IMR-90 (cell line): ENCODE measurements at regions of chr10 and their contacts with region 1.

Region 1: DNA sequence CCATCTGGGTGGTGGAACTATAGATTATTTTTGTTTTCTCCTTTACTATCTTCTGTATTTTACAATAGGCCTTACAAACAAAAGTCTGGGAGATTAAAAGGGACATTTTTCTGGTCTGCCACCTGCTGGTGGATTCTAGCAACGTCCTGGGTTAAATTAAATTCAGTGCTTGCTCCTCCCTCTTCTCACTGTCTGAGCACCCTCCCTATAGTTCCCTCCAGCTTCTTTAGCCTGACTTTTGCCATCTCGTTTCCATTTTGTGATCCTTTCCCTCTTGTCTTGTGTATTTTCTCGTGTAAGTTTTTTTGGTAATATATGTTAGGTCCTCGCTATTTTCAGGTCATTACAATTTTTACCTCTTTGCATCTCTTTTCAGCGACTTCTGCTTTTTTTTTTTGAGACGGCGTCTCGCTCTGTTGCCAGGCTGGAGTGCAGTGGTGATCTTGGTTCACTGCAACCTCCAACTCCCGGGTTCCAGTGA is 16.1 kb downstream of the ANKRD16 start:
- DNase-seq: peak; percentile 70
- ATAC-seq: peak; percentile 89
- H3K4me3 ChIP-seq: no peak overlapping the region
- H3K27ac ChIP-seq: no peak overlapping the region
- H3K4me1 ChIP-seq: 0 out of 2 replicates have a peak, but pooled peaks cover 4% of the 10 kb centered on the region
- H3K27me3 ChIP-seq: no peaks in the 10 kb centered on the region
- CTCF ChIP-seq: peak; percentile 74
- POLR2A ChIP-seq: no peak
- RAD21 ChIP-seq: peak; percentile 62

Region 2: GRCh38 chr10:5434017-5434753 is 439.4 kb before region 1 on chr10:
- CTCF ChIA-PET with region 1: no interaction called
- POLR2A ChIA-PET with region 1: interaction called, 14 read pairs
- dilution Hi-C with region 1: no loop called
- in situ Hi-C with region 1: no loop called
- intact Hi-C with region 1: no loop called
- DNase-seq: peak; percentile 81
- ATAC-seq: peak; percentile 89
- H3K4me3 ChIP-seq: no peak overlapping the region
- H3K27ac ChIP-seq: peak overlapping the region; percentile 74; the same call in 1 of the 2 replicates
- H3K4me1 ChIP-seq: peaks cover 7% of the 10 kb centered on the region
- H3K27me3 ChIP-seq: no peaks in the 10 kb centered on the region
- CTCF ChIP-seq: peak; percentile 74
- POLR2A ChIP-seq: no peak
- RAD21 ChIP-seq: peak; percentile 66

Region 3: GRCh38 chr10:5446390-5446926 is 427.1 kb before region 1 on chr10:
- CTCF ChIA-PET with region 1: no interaction called
- POLR2A ChIA-PET with region 1: no interaction called
- dilution Hi-C with region 1: no loop called
- in situ Hi-C with region 1: loop called (anchors 25 kb)
- intact Hi-C with region 1: loop called (anchors 5 kb)
- DNase-seq: peak; percentile 84
- ATAC-seq: peak; percentile 91
- H3K4me3 ChIP-seq: peak overlapping the region; percentile 64
- H3K27ac ChIP-seq: peak overlapping the region; percentile 74
- H3K4me1 ChIP-seq: peaks cover 5% of the 10 kb centered on the region; the same call in 1 of the 2 replicates
- H3K27me3 ChIP-seq: no peaks in the 10 kb centered on the region
- CTCF ChIP-seq: no peak
- POLR2A ChIP-seq: peak; percentile 98
- RAD21 ChIP-seq: peak; percentile 5; the same call in 1 of the 2 replicates

Region 4: GRCh38 chr10:5466418-5467154 is 407.0 kb before region 1 on chr10:
- CTCF ChIA-PET with region 1: no interaction called
- POLR2A ChIA-PET with region 1: no interaction called
- dilution Hi-C with region 1: no loop called
- in situ Hi-C with region 1: loop called (anchors 25 kb)
- intact Hi-C with region 1: no loop called
- DNase-seq: peak; percentile 82
- ATAC-seq: peak; percentile 92
- H3K4me3 ChIP-seq: no peak overlapping the region
- H3K27ac ChIP-seq: peak overlapping the region; percentile 19; the same call in 1 of the 2 replicates
- H3K4me1 ChIP-seq: peaks cover 16% of the 10 kb centered on the region
- H3K27me3 ChIP-seq: no peaks in the 10 kb centered on the region
- CTCF ChIP-seq: no peak
- POLR2A ChIP-seq: no peak
- RAD21 ChIP-seq: no peak

Region 5: DNA sequence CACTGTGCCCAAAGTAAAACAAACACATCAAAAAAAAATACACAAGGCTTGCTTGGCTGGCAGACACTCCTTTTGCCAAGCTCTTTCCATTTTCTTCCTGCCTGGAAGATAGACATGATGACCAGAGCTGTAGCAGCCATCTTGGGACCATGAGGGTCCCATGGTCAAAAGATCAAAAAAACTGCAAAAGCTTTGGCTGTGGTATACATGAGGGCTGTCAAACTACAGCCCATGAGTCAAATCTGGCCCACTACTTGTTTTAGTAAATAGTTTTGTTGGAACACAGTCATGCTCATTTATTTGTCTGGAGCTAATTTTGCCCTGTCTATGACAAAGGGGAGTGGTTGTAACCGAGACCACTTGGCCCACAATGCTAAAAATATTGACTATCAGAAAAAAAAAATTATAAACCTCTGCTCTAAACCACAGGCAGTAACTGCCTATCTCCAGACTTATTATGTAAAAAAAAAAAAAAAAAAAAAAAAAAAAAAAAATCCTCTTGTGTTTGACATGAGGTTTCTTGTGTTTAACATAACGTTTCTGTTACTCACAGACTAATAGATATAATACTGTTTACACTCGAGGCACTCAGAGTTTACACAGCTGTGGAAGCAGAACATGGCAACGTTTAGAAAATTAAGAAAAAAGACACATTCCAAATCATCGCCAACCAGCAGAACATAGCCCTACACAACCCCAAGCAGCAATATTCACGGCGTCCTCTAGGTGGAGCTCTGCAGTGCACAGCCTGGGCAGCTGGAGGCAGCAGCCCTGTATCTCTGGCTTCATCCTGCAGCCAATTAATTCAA is 244.0 kb before region 1 on chr10:
- CTCF ChIA-PET with region 1: interaction called, 4 read pairs
- POLR2A ChIA-PET with region 1: no interaction called
- dilution Hi-C with region 1: no loop called
- in situ Hi-C with region 1: no loop called
- intact Hi-C with region 1: loop called (anchors 2 kb)
- DNase-seq: peak; percentile 96
- ATAC-seq: peak; percentile 96
- H3K4me3 ChIP-seq: no peak overlapping the region
- H3K27ac ChIP-seq: peak overlapping the region; percentile 13; the same call in 1 of the 2 replicates
- H3K4me1 ChIP-seq: peaks cover 5% of the 10 kb centered on the region; the same call in 1 of the 2 replicates
- H3K27me3 ChIP-seq: no peaks in the 10 kb centered on the region; the same call in 1 of the 2 replicates
- CTCF ChIP-seq: peak; percentile 96
- POLR2A ChIP-seq: no peak
- RAD21 ChIP-seq: peak; percentile 71

Region 6: DNA sequence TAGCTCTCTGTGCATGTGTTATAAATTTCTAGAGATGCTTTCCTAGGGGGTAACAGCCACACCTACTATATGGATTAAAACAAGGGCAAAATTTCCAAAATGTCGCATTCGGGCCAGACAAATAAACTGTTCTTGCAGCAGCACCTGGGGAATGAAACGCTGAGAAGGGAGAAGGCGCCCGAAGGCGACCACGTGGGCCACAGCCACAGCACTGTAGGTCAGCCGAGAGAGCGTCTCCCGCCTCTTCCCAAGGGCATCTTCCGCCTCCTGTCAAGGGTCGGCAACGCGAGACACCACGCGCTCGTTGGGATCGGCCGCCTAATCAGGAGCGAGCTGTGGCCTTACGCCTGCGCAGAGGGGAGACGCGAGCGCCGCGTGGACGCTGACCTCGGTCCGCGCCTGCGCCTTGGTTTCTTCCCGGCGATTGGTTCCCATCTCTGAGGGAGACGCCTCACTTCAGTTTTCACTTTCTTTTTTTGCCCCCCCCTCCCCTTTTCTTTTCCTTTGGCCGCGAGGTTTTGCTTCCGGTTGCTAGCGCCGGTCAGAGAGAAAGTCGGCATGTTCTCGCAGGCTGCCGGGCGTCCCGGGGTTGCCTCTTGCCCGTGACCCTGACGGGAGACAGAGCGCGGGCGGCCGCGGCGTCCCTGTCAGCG is 189.1 kb before region 1 on chr10 and contains the start of gene TASOR2:
- CTCF ChIA-PET with region 1: no interaction called
- POLR2A ChIA-PET with region 1: no interaction called
- dilution Hi-C with region 1: no loop called
- in situ Hi-C with region 1: no loop called
- intact Hi-C with region 1: loop called (anchors 1 kb)
- DNase-seq: peak; percentile 95
- ATAC-seq: peak; percentile 96
- H3K4me3 ChIP-seq: peak within 1 kb of the TSS; percentile 72
- H3K27ac ChIP-seq: peak within 1 kb of the TSS; percentile 48
- H3K4me1 ChIP-seq: no peaks in the 10 kb centered on the region
- H3K27me3 ChIP-seq: no peaks in the 10 kb centered on the region
- CTCF ChIP-seq: no peak
- POLR2A ChIP-seq: peak; percentile 86
- RAD21 ChIP-seq: no peak
- total RNA-seq, gene TASOR2: 53.6 and 64.7 TPM in 2 replicates

Region 7: GRCh38 chr10:5813287-5814109 is 60.1 kb before region 1 on chr10 and contains the start of gene GDI2:
- CTCF ChIA-PET with region 1: no interaction called
- POLR2A ChIA-PET with region 1: no interaction called
- dilution Hi-C with region 1: no loop called
- in situ Hi-C with region 1: no loop called
- intact Hi-C with region 1: loop called (anchors 1 kb)
- DNase-seq: peak; percentile 95
- ATAC-seq: peak; percentile 97
- H3K4me3 ChIP-seq: peak within 1 kb of the TSS; percentile 81
- H3K27ac ChIP-seq: peak within 1 kb of the TSS; percentile 99
- H3K4me1 ChIP-seq: peaks cover 5% of the 10 kb centered on the region
- H3K27me3 ChIP-seq: no peaks in the 10 kb centered on the region
- CTCF ChIP-seq: no peak
- POLR2A ChIP-seq: peak; percentile 96
- RAD21 ChIP-seq: no peak
- total RNA-seq, gene GDI2: 396 and 608 TPM in 2 replicates